Transverse colon (tissue), 4 donors: ENCODE measurements at regions of chr5 and their contacts with region 1.

Region 1: DNA sequence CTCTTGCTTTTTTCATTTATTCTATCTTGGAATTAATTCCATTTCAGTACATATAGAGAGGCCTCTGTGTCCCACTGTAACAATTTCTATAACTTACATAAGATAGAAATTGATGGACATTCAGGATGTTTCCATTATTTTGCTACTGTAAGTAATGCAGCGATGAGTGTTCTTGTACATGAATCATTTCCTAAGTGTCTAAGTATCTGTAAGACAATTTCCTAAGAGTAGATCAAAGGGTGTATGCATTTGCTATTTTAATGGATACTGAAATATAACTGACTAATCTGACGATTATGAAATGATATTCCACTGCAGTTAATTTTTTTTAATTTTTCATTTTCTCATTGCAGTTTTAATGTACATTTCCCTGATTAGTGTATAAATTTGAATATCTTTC is 23.0 kb upstream of the RBM22 start:
- DNase-seq: no peak
- H3K4me3 ChIP-seq: no peak overlapping the region
- H3K27ac ChIP-seq: no peak overlapping the region
- H3K4me1 ChIP-seq: no peaks in the 10 kb centered on the region
- H3K27me3 ChIP-seq: no peaks in the 10 kb centered on the region
- CTCF ChIP-seq: no peak
- EP300 ChIP-seq: no peak
- POLR2A ChIP-seq: no peak

Region 2: GRCh38 chr5:150740992-150741391 is 17.1 kb after region 1 on chr5:
- in situ Hi-C with region 1: no loop called
- intact Hi-C with region 1: loop called (anchors 1 kb)
- DNase-seq: no peak
- H3K4me3 ChIP-seq: no peak overlapping the region
- H3K27ac ChIP-seq: no peak overlapping the region
- H3K4me1 ChIP-seq: peaks cover 0 to 18% (median 2%) of the 10 kb centered on the region in 4 donors
- H3K27me3 ChIP-seq: no peaks in the 10 kb centered on the region
- CTCF ChIP-seq: no peak
- EP300 ChIP-seq: no peak
- POLR2A ChIP-seq: no peak

Region 3: GRCh38 chr5:151270599-151270998 is 546.8 kb after region 1 on chr5:
- in situ Hi-C with region 1: no loop called
- intact Hi-C with region 1: no loop called
- DNase-seq: no peak
- H3K4me3 ChIP-seq: no peak overlapping the region
- H3K27ac ChIP-seq: no peak overlapping the region
- H3K4me1 ChIP-seq: no peaks in the 10 kb centered on the region
- H3K27me3 ChIP-seq: no peaks in the 10 kb centered on the region
- CTCF ChIP-seq: no peak
- EP300 ChIP-seq: no peak
- POLR2A ChIP-seq: no peak